Activated naive CD4-positive, alpha-beta T cell treated with anti-CD3 and anti-CD28 coated beads, Interleukin-2, amount 10 ng/mL, durations not matched to agents 7 days and 5 days (primary cell): ENCODE measurements at regions of chr10 and their contacts with region 1.

Region 1: GRCh38 chr10:47277352-47278151 is 22.4 kb upstream of the GDF10 start:
- DNase-seq: peak; percentile 82
- H3K4me3 Mint-ChIP-seq: peak overlapping the region; percentile 16
- H3K27ac Mint-ChIP-seq: peak overlapping the region; percentile 86
- H3K4me1 Mint-ChIP-seq: peaks cover 47% of the 10 kb centered on the region
- H3K27me3 Mint-ChIP-seq: peaks cover 15% of the 10 kb centered on the region

Region 2: DNA sequence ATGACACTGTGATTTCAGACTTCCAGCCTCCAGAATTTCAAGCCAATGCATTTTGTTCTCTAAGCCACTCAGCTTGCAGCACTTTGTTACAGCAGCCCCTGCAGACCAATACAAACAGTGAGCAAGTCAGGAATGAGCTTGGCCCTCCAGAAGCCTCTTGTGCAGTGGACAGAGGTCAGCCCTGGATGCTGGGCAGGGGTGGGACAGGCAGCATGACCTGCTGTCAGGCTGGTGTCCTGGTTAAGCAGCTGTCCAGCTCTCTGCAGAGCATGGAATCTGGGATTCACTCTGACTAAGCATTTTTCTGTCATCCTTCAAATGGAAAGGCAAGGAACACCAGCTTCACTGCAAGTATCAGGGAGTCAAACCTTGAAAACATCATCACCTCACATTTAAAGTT is 63.0 kb before region 1 on chr10:
- CTCF ChIA-PET with region 1: no interaction called
- DNase-seq: no peak
- H3K4me3 Mint-ChIP-seq: no peak overlapping the region
- H3K27ac Mint-ChIP-seq: no peak overlapping the region
- H3K4me1 Mint-ChIP-seq: peaks cover 9% of the 10 kb centered on the region
- H3K27me3 Mint-ChIP-seq: peaks cover 4% of the 10 kb centered on the region

Region 3: GRCh38 chr10:47253651-47254375 is 23.7 kb before region 1 on chr10:
- CTCF ChIA-PET with region 1: no interaction called
- DNase-seq: no peak
- H3K4me3 Mint-ChIP-seq: no peak overlapping the region
- H3K27ac Mint-ChIP-seq: no peak overlapping the region
- H3K4me1 Mint-ChIP-seq: peaks cover 50% of the 10 kb centered on the region
- H3K27me3 Mint-ChIP-seq: peaks cover 4% of the 10 kb centered on the region

Region 4: DNA sequence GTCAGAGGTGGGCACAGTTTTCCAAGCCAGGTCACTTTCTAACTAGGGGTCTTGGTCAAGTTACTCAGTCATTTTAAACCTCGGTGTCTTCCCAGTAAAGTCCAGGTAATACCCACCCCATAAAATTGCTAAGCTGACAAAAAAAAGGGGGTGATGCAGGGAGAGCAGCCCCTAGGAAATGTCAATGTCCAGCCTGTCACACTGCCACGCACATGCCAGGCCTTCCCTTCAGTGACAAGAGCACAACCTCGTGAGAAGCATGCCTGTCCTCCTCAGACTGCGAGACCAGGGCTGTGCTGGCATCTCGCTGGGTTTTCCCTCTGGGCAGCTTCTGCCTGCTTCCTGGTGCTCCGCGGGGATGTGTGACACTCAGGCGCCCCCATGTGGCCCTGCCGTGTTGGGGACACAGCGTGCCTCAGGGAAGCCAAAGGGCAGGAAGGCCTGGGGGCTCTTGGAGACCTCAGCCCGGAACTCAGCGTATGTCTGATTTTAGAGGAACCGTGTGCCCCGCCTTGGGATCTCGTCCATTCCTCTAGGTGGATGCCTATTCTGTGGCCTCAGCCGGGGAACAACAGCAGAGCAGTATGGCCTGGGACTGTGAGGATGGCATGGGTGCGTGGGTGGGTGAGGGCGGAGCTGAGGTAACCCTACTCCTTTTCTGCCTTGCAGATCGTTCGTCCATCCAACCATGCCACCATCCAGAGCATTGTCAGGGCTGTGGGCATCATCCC is 34.5 kb after region 1 on chr10:
- CTCF ChIA-PET with region 1: interaction called, 14 read pairs
- DNase-seq: peak; percentile 91
- H3K4me3 Mint-ChIP-seq: peak overlapping the region; percentile 21
- H3K27ac Mint-ChIP-seq: peak overlapping the region; percentile 87
- H3K4me1 Mint-ChIP-seq: peaks cover 25% of the 10 kb centered on the region
- H3K27me3 Mint-ChIP-seq: peaks cover 15% of the 10 kb centered on the region

Region 5: GRCh38 chr10:47384148-47384921 is 106.8 kb after region 1 on chr10 and contains the start of gene ZNF488:
- CTCF ChIA-PET with region 1: no interaction called
- DNase-seq: peak; percentile 81
- H3K4me3 Mint-ChIP-seq: peak within 1 kb of the TSS; percentile 89
- H3K27ac Mint-ChIP-seq: no peak within 1 kb of the TSS
- H3K4me1 Mint-ChIP-seq: peaks cover 25% of the 10 kb centered on the region
- H3K27me3 Mint-ChIP-seq: peaks cover 80% of the 10 kb centered on the region